Activated naive CD4-positive, alpha-beta T cell treated with anti-CD3 and anti-CD28 coated beads for 36 hours (primary cell): ENCODE measurements at regions of chr1 and their contacts with region 1.

Region 1: DNA sequence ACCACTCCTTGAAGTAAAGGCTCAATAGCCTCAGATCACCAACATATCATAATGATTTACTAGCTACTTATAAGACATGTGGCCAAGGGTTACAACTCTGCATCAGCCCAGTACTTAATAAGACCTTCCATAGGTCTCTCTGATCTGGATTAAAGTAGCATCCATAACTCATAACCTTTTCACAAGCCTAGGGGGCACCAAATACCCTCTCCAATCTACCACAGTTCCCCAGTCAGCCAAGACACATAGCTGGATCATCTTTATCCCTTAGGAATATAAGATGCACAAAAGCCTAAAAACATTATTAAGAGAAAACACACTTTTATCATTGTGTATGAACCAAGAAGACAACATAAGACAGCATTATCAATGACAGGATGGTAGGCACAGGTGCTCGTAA is 22.1 kb downstream of the SSX2IP start:
- DNase-seq: peak; percentile 13
- H3K4me3 Mint-ChIP-seq: no peak overlapping the region
- H3K27ac Mint-ChIP-seq: no peak overlapping the region
- H3K4me1 Mint-ChIP-seq: peaks cover 5% of the 10 kb centered on the region
- H3K27me3 Mint-ChIP-seq: no peaks in the 10 kb centered on the region

Region 2: GRCh38 chr1:84724128-84724860 is 56.1 kb after region 1 on chr1:
- CTCF ChIA-PET with region 1: interaction called, 18 read pairs
- intact Hi-C with region 1: loop called (anchors 1 kb)
- DNase-seq: peak; percentile 63
- H3K4me3 Mint-ChIP-seq: no peak overlapping the region
- H3K27ac Mint-ChIP-seq: no peak overlapping the region
- H3K4me1 Mint-ChIP-seq: peaks cover 3% of the 10 kb centered on the region
- H3K27me3 Mint-ChIP-seq: no peaks in the 10 kb centered on the region

Region 3: GRCh38 chr1:84795966-84796600 is 127.9 kb after region 1 on chr1:
- CTCF ChIA-PET with region 1: no interaction called
- intact Hi-C with region 1: no loop called
- DNase-seq: no peak
- H3K4me3 Mint-ChIP-seq: no peak overlapping the region
- H3K27ac Mint-ChIP-seq: no peak overlapping the region
- H3K4me1 Mint-ChIP-seq: no peaks in the 10 kb centered on the region
- H3K27me3 Mint-ChIP-seq: peaks cover 3% of the 10 kb centered on the region

Region 4: DNA sequence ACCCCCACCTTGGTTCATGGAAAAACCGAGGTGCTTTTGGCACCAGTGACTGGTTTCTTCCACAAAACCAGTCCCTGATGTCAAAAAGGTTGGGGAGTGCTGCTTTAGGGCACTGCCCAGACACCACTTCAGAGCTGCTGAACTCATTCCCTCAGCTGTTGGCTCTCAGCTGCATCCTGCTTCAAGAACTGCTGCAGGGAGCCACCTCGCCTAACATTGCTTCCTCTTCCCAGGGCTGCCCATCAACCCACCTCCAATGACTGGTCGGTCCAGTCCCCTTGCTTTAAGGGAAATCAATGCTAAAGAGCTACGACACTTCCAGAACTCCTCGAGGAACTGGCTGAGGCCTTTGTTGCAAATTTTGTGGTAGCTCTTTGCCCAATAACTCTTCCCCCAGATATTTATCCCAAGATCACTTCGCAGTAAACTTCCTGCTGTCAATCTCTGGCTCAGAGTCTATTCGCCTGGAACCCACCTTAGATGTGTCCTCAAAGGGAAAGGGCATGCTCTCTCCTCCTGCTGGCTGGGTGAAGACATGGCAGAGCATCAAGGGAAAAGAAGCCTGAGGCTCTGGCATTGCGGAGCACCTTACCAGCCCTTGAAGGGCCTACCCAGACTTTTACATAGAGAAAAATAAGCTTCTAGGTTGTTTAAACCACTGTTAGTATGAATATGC is 562.3 kb after region 1 on chr1:
- CTCF ChIA-PET with region 1: no interaction called
- intact Hi-C with region 1: no loop called
- DNase-seq: peak; percentile 7
- H3K4me3 Mint-ChIP-seq: no peak overlapping the region
- H3K27ac Mint-ChIP-seq: no peak overlapping the region
- H3K4me1 Mint-ChIP-seq: no peaks in the 10 kb centered on the region
- H3K27me3 Mint-ChIP-seq: peaks cover 2% of the 10 kb centered on the region